ENCODE measurements at regions of chr1 and their contacts with region 1.

Region 1: GRCh38 chr1:171485375-171486047 is at the start of gene PRRC2C:
- DNase-seq: peak; percentile 96
- H3K4me3 Mint-ChIP-seq: peak within 1 kb of the TSS; percentile 84
- H3K27ac Mint-ChIP-seq: peak within 1 kb of the TSS; percentile 94
- H3K4me1 Mint-ChIP-seq: peaks cover 39% of the 10 kb centered on the region
- H3K27me3 Mint-ChIP-seq: no peaks in the 10 kb centered on the region
- total RNA-seq, gene PRRC2C: 199 to 206 TPM

Region 2: DNA sequence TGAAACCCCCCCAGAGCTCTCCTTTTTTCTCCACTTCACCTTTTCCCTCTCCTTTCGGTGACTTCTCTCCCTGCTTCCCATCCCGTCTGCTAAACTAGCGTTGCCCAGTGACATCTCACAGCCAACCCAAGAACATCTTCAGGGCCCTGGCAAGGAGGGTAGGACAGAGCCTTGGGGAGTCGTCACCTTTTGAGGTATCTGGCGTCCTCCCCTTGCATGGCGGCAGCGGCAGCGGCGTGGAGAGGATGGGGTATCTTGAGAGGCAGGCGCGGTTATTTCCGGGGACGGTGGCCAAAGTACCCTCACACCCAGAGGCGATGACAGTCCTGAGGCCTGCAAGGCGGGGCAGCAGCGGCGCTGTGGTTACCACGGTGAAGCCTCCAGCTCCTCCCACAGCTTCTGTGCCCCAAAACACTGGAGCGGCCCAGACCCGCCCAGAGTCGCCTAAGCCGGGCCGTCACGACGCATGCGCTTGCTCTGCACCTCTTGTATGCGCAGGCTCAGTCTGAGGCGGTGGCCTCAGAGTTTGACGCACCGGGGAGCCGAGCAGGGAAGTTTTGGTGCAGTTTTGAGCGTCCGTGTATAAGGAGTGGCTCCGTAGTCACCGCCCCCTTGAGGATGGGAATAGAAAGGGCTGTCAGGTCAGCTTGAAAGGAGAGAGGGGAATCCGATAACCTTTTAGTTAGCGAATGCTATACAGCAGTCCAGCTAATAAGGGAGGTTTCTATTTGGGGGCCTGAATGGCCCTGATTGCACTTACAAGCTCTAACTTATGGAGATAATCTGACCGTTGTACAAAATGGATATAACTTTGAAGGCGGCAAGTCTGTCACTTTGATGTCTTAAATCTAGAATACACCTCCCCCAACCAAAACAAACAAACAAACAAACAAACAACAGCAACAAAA is 1411.0 kb before region 1 on chr1 and contains the start of gene KIFAP3:
- CTCF ChIA-PET with region 1: no interaction called
- intact Hi-C with region 1: loop called (anchors 5 kb)
- DNase-seq: peak; percentile 98
- H3K4me3 Mint-ChIP-seq: peak within 1 kb of the TSS; percentile 92
- H3K27ac Mint-ChIP-seq: peak within 1 kb of the TSS; percentile 74
- H3K4me1 Mint-ChIP-seq: peaks cover 48% of the 10 kb centered on the region
- H3K27me3 Mint-ChIP-seq: no peaks in the 10 kb centered on the region
- total RNA-seq, gene KIFAP3: 8.7 to 8.8 TPM

Region 3: DNA sequence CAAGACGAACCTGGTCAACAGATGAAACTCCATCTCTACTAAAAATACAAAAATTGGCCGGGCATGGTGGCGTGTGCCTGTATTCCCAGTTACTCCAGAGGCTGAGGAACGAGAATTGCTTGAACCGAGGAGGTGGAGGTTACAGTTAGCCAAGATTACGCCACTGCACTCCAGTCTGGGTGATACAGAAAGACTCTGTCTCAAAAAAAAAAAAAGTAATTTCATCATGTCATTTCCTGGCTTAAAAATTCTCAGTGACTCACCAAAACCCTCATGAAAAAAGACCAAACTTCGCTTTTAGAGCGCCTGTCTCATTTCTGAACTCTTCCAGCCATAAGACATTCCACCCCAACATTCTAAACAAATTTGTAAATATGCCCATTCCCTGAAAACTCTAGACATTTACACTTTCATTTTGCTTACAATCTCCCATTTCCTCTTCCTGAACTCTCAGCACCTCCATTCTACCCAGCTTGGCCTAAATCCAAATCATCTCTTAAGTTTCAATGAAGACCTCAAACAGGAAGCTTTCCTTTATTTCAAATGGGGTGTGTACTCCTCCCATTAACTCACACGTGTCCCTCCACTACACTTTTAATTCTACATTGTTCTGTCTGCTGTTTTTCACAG is 50.7 kb before region 1 on chr1:
- CTCF ChIA-PET with region 1: no interaction called
- intact Hi-C with region 1: loop called (anchors 2 kb)
- DNase-seq: peak; percentile 52
- H3K4me3 Mint-ChIP-seq: peak overlapping the region; percentile 23
- H3K27ac Mint-ChIP-seq: peak overlapping the region; percentile 87
- H3K4me1 Mint-ChIP-seq: peaks cover 18% of the 10 kb centered on the region
- H3K27me3 Mint-ChIP-seq: peaks cover 6% of the 10 kb centered on the region

Region 4: DNA sequence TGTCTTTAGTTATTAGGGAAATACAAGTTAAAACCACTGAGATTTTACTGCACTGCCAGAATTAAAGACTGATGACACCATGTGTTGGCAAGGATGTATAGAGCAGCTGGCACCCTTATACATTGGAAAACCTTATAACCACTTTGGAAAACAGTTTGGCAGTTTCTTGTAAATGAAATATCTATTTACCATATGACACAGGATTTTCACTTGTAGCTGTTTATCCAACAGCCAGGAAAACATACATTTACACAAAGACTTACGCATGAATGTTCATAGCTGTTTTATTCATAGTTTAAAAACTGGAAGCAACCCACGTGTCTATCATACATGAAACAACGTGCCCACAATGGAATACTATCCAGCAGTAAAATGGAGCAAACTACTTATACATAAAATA is 45.2 kb after region 1 on chr1:
- CTCF ChIA-PET with region 1: interaction called, 10 read pairs
- intact Hi-C with region 1: no loop called
- DNase-seq: no peak
- H3K4me3 Mint-ChIP-seq: no peak overlapping the region
- H3K27ac Mint-ChIP-seq: peak overlapping the region; percentile 18
- H3K4me1 Mint-ChIP-seq: peaks cover 4% of the 10 kb centered on the region
- H3K27me3 Mint-ChIP-seq: no peaks in the 10 kb centered on the region

Region 5: GRCh38 chr1:171654942-171655745 is 169.6 kb after region 1 on chr1:
- CTCF ChIA-PET with region 1: no interaction called
- intact Hi-C with region 1: loop called (anchors 2 kb)
- DNase-seq: peak; percentile 92
- H3K4me3 Mint-ChIP-seq: peak overlapping the region; percentile 39
- H3K27ac Mint-ChIP-seq: no peak overlapping the region
- H3K4me1 Mint-ChIP-seq: peaks cover 11% of the 10 kb centered on the region
- H3K27me3 Mint-ChIP-seq: peaks cover 5% of the 10 kb centered on the region

Region 6: DNA sequence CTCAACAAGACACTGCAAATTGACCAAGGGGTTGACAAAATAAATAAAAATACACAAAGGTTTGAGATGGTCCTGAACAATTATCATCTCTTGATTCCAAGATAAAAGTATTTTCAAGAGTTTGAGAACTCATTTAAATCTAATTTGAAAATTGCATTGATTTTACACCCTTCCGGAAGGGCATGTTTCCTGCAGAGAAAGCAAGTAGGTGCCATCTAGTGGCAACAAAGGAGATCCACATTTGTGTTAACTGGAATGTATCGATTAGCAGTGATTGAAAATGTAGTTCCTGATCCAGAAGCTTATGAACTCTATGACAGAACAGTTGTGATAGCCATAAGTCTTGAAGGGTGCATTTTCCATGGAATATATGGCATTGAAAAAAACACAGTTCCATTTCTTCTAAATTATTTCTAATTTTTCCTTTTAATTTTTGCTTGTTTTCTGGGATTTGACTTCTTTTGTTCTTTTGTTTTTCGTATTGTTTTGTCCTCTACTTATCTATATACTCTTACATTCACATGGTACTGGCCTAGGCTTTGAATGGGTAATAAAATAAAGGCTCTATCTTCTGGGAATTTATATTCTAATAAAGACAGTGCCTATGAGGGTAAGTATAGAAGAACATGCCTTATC is 499.5 kb after region 1 on chr1:
- CTCF ChIA-PET with region 1: no interaction called
- intact Hi-C with region 1: loop called (anchors 1 kb)
- DNase-seq: no peak
- H3K4me3 Mint-ChIP-seq: no peak overlapping the region
- H3K27ac Mint-ChIP-seq: no peak overlapping the region
- H3K4me1 Mint-ChIP-seq: no peaks in the 10 kb centered on the region
- H3K27me3 Mint-ChIP-seq: no peaks in the 10 kb centered on the region